Activated CD4-positive, alpha-beta memory T cell treated with anti-CD3 and anti-CD28 coated beads for 36 hours (primary cell): ENCODE measurements at regions of chr14 and their contacts with region 1.

Region 1: GRCh38 chr14:39232554-39233415 is 930 bp upstream of the MIA2 start:
- DNase-seq: no peak
- H3K4me3 Mint-ChIP-seq: no peak overlapping the region
- H3K27ac Mint-ChIP-seq: peak overlapping the region; percentile 23
- H3K4me1 Mint-ChIP-seq: peaks cover 43% of the 10 kb centered on the region
- H3K27me3 Mint-ChIP-seq: no peaks in the 10 kb centered on the region

Region 2: GRCh38 chr14:39102969-39103957 is 129.5 kb before region 1 on chr14 and contains the start of gene SEC23A:
- CTCF ChIA-PET with region 1: no interaction called
- POLR2A ChIA-PET with region 1: interaction called, 3 read pairs
- intact Hi-C with region 1: loop called (anchors 1 kb)
- DNase-seq: peak; percentile 90
- H3K4me3 Mint-ChIP-seq: peak within 1 kb of the TSS; percentile 96
- H3K27ac Mint-ChIP-seq: peak within 1 kb of the TSS; percentile 96
- H3K4me1 Mint-ChIP-seq: peaks cover 42% of the 10 kb centered on the region
- H3K27me3 Mint-ChIP-seq: no peaks in the 10 kb centered on the region
- total RNA-seq, gene SEC23A: 52.4 to 54.9 TPM

Region 3: GRCh38 chr14:39174560-39175444 is 58.0 kb before region 1 on chr14 and contains the start of gene PNN:
- CTCF ChIA-PET with region 1: interaction called, 3 read pairs
- POLR2A ChIA-PET with region 1: interaction called, 7 read pairs
- intact Hi-C with region 1: loop called (anchors 1 kb)
- DNase-seq: peak; percentile 98
- H3K4me3 Mint-ChIP-seq: peak within 1 kb of the TSS; percentile 89
- H3K27ac Mint-ChIP-seq: peak within 1 kb of the TSS; percentile 95
- H3K4me1 Mint-ChIP-seq: peaks cover 32% of the 10 kb centered on the region
- H3K27me3 Mint-ChIP-seq: no peaks in the 10 kb centered on the region
- total RNA-seq, gene PNN: 85.3 to 88.8 TPM

Region 4: DNA sequence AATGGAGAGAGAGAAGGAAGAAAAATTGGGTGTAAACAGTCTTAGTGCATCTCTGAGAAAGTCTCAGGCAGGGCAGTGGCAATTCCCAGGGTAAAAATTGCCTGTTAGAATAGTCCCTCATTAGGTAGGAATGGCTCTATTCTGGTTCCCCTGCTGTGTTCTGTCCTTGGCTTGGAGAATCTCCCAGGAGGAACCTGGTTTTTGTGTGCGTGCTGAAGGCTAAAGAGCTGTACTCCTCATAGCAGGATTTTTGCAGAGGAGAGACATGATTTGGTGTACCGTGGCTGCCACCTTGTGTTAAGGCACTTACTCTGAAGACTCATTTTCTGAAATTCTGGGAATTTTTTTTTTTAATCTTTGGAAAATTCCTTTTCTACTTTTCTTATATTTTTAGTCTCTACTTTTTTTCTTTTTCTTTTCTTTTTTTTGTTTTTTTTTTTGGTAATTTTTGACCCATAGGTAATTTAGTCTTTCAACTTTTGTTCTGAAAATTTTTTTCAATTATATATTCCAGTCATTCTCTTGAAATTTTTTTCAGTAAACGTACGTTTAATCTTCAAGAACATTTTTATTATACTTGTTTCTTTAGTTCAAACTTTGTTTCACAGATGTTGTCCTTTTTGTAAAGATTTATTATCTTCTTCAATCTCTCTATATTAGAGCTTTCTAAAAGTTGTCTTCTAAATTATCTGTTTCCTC is 135.6 kb after region 1 on chr14:
- CTCF ChIA-PET with region 1: interaction called, 10 read pairs
- POLR2A ChIA-PET with region 1: no interaction called
- intact Hi-C with region 1: loop called (anchors 1 kb)
- DNase-seq: peak; percentile 47
- H3K4me3 Mint-ChIP-seq: no peak overlapping the region
- H3K27ac Mint-ChIP-seq: no peak overlapping the region
- H3K4me1 Mint-ChIP-seq: no peaks in the 10 kb centered on the region
- H3K27me3 Mint-ChIP-seq: no peaks in the 10 kb centered on the region

Region 5: DNA sequence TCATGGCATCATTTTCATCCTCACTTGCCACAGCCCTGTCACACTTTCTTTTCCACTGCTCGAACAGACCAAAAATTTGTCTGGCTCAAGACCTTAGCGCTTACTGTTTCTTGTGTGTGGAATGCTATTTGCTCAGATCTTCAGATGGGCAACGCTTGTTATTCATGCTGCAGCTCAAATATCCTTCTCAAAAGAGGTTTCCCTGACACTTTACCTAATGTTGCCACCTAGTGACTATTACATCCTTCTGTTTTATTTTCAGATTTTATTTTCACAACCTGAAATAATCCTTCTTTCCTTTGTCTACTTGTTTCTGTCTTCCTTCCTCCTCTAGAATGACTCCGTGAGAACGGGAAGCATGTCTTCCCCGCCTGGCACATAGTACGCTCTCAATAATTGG is 193.8 kb after region 1 on chr14:
- CTCF ChIA-PET with region 1: interaction called, 13 read pairs
- POLR2A ChIA-PET with region 1: interaction called, 14 read pairs
- intact Hi-C with region 1: loop called (anchors 1 kb)
- DNase-seq: no peak
- H3K4me3 Mint-ChIP-seq: no peak overlapping the region
- H3K27ac Mint-ChIP-seq: peak overlapping the region; percentile 13
- H3K4me1 Mint-ChIP-seq: peaks cover 61% of the 10 kb centered on the region
- H3K27me3 Mint-ChIP-seq: no peaks in the 10 kb centered on the region

Region 6: GRCh38 chr14:39451811-39452210 is 219.0 kb after region 1 on chr14:
- CTCF ChIA-PET with region 1: no interaction called
- POLR2A ChIA-PET with region 1: no interaction called
- intact Hi-C with region 1: loop called (anchors 5 kb)
- DNase-seq: no peak
- H3K4me3 Mint-ChIP-seq: no peak overlapping the region
- H3K27ac Mint-ChIP-seq: peak overlapping the region; percentile 50
- H3K4me1 Mint-ChIP-seq: peaks cover 32% of the 10 kb centered on the region
- H3K27me3 Mint-ChIP-seq: no peaks in the 10 kb centered on the region